Psoas muscle (tissue), 8 donors: ENCODE measurements at regions of chr16 and their contacts with region 1.

Region 1: DNA sequence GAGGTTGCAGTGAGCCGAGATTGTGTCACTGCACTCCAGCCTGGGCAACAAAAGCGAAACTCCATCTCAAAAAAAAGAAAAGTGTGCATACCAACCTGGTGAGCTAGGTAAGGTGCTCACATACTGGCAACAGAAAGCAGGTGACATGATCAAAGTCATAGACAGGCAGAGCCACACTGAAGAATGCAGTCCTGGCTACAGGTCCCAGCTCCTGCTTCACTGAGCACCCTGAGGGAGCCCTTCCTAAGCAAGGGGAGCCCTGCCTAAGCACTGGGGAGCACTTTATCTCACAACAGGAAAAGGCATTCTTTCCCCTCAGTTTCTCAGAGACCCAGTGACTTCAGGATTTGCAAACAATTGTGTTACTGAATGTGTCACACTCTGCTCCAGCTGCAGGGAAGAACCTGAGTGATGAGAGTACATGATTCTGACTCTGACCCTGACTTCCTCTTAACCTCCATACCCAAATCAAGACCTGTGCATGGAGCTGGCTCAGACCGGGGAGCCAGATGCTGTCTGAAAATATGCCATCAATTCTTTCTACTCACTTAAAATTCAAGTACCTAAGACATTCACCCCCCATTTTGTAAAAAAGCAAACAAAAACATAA is 40.5 kb downstream of the ANKRD11 start:
- DNase-seq: no peak
- ATAC-seq: no peak
- H3K4me3 ChIP-seq: no peak overlapping the region
- H3K27ac ChIP-seq: peak overlapping the region; percentile 3
- H3K4me1 ChIP-seq: peaks cover 71% of the 10 kb centered on the region
- H3K27me3 ChIP-seq: no peaks in the 10 kb centered on the region
- CTCF ChIP-seq: no peak

Region 2: GRCh38 chr16:88599092-88599733 is 850.6 kb before region 1 on chr16:
- intact Hi-C with region 1: no loop called
- DNase-seq: peak; percentile 79 to 87
- ATAC-seq: peak; percentile 23 to 71 (median 64)
- H3K4me3 ChIP-seq: no peak overlapping the region
- H3K27ac ChIP-seq: peak overlapping the region; percentile 38
- H3K4me1 ChIP-seq: no peaks in the 10 kb centered on the region
- H3K27me3 ChIP-seq: no peaks in the 10 kb centered on the region
- CTCF ChIP-seq: no peak

Region 3: GRCh38 chr16:89363621-89364393 is 86.0 kb before region 1 on chr16:
- intact Hi-C with region 1: no loop called
- DNase-seq: peak in 1 of 2 donors; percentile 54
- ATAC-seq: peak; percentile 58 to 62 (median 60)
- H3K4me3 ChIP-seq: no peak overlapping the region
- H3K27ac ChIP-seq: peak overlapping the region; percentile 46
- H3K4me1 ChIP-seq: peaks cover 77% of the 10 kb centered on the region
- H3K27me3 ChIP-seq: no peaks in the 10 kb centered on the region
- CTCF ChIP-seq: no peak

Region 4: GRCh38 chr16:89484923-89485679 is 35.3 kb after region 1 on chr16:
- intact Hi-C with region 1: loop called in 1 of 2 experiments (anchors 5 kb)
- DNase-seq: peak in 1 of 2 donors; percentile 53
- ATAC-seq: peak; percentile 56 to 71 (median 66)
- H3K4me3 ChIP-seq: peak overlapping the region; percentile 27
- H3K27ac ChIP-seq: peak overlapping the region; percentile 64
- H3K4me1 ChIP-seq: peaks cover 83% of the 10 kb centered on the region
- H3K27me3 ChIP-seq: no peaks in the 10 kb centered on the region
- CTCF ChIP-seq: no peak